ENCODE measurements at regions of chr15 and their contacts with region 1.

Region 1: GRCh38 chr15:60397772-60398445 is at the start of gene ANXA2:
- DNase-seq: peak; percentile 61 to 91 (median 85)
- ATAC-seq: peak; percentile 85
- H3K4me3 ChIP-seq: peak within 1 kb of the TSS; percentile 63 to 66
- H3K4me3 Mint-ChIP-seq: peak within 1 kb of the TSS; percentile 85
- H3K27ac ChIP-seq: peak within 1 kb of the TSS; percentile 50 to 68
- H3K27ac Mint-ChIP-seq: peak within 1 kb of the TSS; percentile 87
- H3K4me1 ChIP-seq: peaks cover 14% of the 10 kb centered on the region
- H3K4me1 Mint-ChIP-seq: peaks cover 31% of the 10 kb centered on the region
- H3K27me3 ChIP-seq: peaks cover 0 to 3% of the 10 kb centered on the region in 2 experiments
- H3K27me3 Mint-ChIP-seq: no peaks in the 10 kb centered on the region
- CTCF ChIP-seq: no peak
- total RNA-seq, gene ANXA2: 25.8 to 31.7 TPM

Region 2: GRCh38 chr15:60408438-60409105 is 10.7 kb after region 1 on chr15:
- CTCF ChIA-PET with region 1: no interaction called
- POLR2A ChIA-PET with region 1: interaction called, 21 read pairs
- intact Hi-C with region 1: no loop called
- DNase-seq: peak in 2 of 9 experiments; percentile 30 to 51
- ATAC-seq: peak; percentile 75
- H3K4me3 ChIP-seq: no peak overlapping the region
- H3K4me3 Mint-ChIP-seq: no peak overlapping the region
- H3K27ac ChIP-seq: peak overlapping the region in 1 of 2 experiments; percentile 57
- H3K27ac Mint-ChIP-seq: peak overlapping the region; percentile 34
- H3K4me1 ChIP-seq: peaks cover 8% of the 10 kb centered on the region
- H3K4me1 Mint-ChIP-seq: peaks cover 9% of the 10 kb centered on the region
- H3K27me3 ChIP-seq: no peaks in the 10 kb centered on the region
- H3K27me3 Mint-ChIP-seq: no peaks in the 10 kb centered on the region
- CTCF ChIP-seq: no peak

Region 3: GRCh38 chr15:60444289-60444912 is 46.5 kb after region 1 on chr15:
- CTCF ChIA-PET with region 1: no interaction called
- POLR2A ChIA-PET with region 1: no interaction called
- intact Hi-C with region 1: loop called in 1 of 2 experiments (anchors 5 kb)
- DNase-seq: peak in 1 of 9 experiments; percentile 19
- ATAC-seq: no peak
- H3K4me3 ChIP-seq: no peak overlapping the region
- H3K4me3 Mint-ChIP-seq: no peak overlapping the region
- H3K27ac ChIP-seq: no peak overlapping the region
- H3K27ac Mint-ChIP-seq: no peak overlapping the region
- H3K4me1 ChIP-seq: no peaks in the 10 kb centered on the region
- H3K4me1 Mint-ChIP-seq: peaks cover 7% of the 10 kb centered on the region
- H3K27me3 ChIP-seq: no peaks in the 10 kb centered on the region
- H3K27me3 Mint-ChIP-seq: no peaks in the 10 kb centered on the region
- CTCF ChIP-seq: no peak

Region 4: GRCh38 chr15:60478566-60479360 is 80.9 kb after region 1 on chr15 and contains the start of gene ICE2:
- CTCF ChIA-PET with region 1: no interaction called
- POLR2A ChIA-PET with region 1: interaction called, 5 read pairs
- intact Hi-C with region 1: loop called (anchors 1 to 5 kb)
- DNase-seq: peak; percentile 88 to 98 (median 96)
- ATAC-seq: peak; percentile 90
- H3K4me3 ChIP-seq: peak within 1 kb of the TSS; percentile 68 to 89
- H3K4me3 Mint-ChIP-seq: peak within 1 kb of the TSS; percentile 98
- H3K27ac ChIP-seq: peak within 1 kb of the TSS; percentile 85 to 92
- H3K27ac Mint-ChIP-seq: peak within 1 kb of the TSS; percentile 100
- H3K4me1 ChIP-seq: peaks cover 39% of the 10 kb centered on the region
- H3K4me1 Mint-ChIP-seq: peaks cover 72% of the 10 kb centered on the region
- H3K27me3 ChIP-seq: no peaks in the 10 kb centered on the region
- H3K27me3 Mint-ChIP-seq: no peaks in the 10 kb centered on the region
- CTCF ChIP-seq: no peak
- total RNA-seq, gene ICE2: 13.9 to 18.3 TPM

Region 5: GRCh38 chr15:60580650-60581376 is 182.9 kb after region 1 on chr15:
- CTCF ChIA-PET with region 1: no interaction called
- POLR2A ChIA-PET with region 1: no interaction called
- intact Hi-C with region 1: loop called in 1 of 2 experiments (anchors 2 kb)
- DNase-seq: peak in 6 of 9 experiments; percentile 33 to 91 (median 60)
- ATAC-seq: peak; percentile 74
- H3K4me3 ChIP-seq: peak overlapping the region; percentile 18 to 21
- H3K4me3 Mint-ChIP-seq: peak overlapping the region; percentile 74
- H3K27ac ChIP-seq: peak overlapping the region; percentile 35 to 85
- H3K27ac Mint-ChIP-seq: peak overlapping the region; percentile 95
- H3K4me1 ChIP-seq: peaks cover 91% of the 10 kb centered on the region
- H3K4me1 Mint-ChIP-seq: peaks cover 92% of the 10 kb centered on the region
- H3K27me3 ChIP-seq: no peaks in the 10 kb centered on the region
- H3K27me3 Mint-ChIP-seq: no peaks in the 10 kb centered on the region
- CTCF ChIP-seq: no peak

Region 6: DNA sequence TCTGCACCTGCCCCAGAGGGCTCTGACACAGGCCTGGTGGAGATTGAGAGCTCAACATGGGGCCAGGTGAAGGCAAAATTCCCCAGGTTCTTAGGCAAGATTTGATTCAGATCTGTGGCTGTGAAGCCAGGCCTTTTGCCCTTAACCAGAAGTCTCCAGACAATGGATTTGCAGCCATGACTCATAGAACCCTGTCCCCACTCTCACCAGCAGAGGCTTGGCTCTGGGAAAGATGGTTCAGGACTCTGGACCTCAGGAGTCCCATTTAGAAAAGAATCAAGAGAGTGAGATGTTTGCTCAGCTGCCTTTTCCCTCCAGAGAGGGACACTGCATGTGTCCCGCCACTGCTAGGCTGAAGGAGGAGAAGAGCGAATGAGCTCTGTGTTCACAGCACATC is 442.4 kb after region 1 on chr15:
- CTCF ChIA-PET with region 1: no interaction called
- POLR2A ChIA-PET with region 1: interaction called, 3 read pairs
- intact Hi-C with region 1: loop called in 1 of 2 experiments (anchors 2 kb)
- DNase-seq: peak in 4 of 9 experiments; percentile 4 to 55 (median 28)
- ATAC-seq: no peak
- H3K4me3 ChIP-seq: peak overlapping the region; percentile 43
- H3K4me3 Mint-ChIP-seq: peak overlapping the region; percentile 86
- H3K27ac ChIP-seq: peak overlapping the region; percentile 51 to 84
- H3K27ac Mint-ChIP-seq: peak overlapping the region; percentile 96
- H3K4me1 ChIP-seq: peaks cover 60% of the 10 kb centered on the region
- H3K4me1 Mint-ChIP-seq: peaks cover 82% of the 10 kb centered on the region
- H3K27me3 ChIP-seq: no peaks in the 10 kb centered on the region
- H3K27me3 Mint-ChIP-seq: no peaks in the 10 kb centered on the region
- CTCF ChIP-seq: no peak